Dendritic cell treated with granulocyte-macrophage colony-stimulating factor and Interleukin-4, amounts not matched to agents 40 ng/mL and 50 ng/mL, for 4 days (primary cell): ENCODE measurements at regions of chrX and their contacts with region 1.

Region 1: DNA sequence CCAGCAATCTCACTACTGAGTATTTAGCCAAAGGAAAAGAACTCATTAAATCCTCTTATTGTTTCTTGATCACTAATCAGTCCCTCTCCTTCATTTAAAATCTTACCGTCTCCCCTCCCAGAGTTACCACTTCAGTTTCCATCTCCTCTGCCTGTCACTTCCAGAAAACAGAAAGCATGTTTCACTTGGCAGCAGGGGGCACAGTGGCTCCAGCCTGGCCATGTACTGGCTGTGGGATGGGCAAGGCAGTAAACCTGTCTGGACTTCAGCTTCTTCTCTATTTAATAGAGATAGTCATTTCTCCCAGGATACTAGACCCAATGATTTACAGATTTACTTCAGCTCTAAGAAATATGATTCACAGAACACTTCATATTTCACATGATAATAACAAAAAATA is 63.2 kb downstream of the CD40LG start:
- H3K4me3 Mint-ChIP-seq: no peak overlapping the region
- H3K27ac Mint-ChIP-seq: peak overlapping the region; percentile 88
- H3K4me1 Mint-ChIP-seq: peaks cover 24% of the 10 kb centered on the region
- H3K27me3 Mint-ChIP-seq: no peaks in the 10 kb centered on the region

Region 2: DNA sequence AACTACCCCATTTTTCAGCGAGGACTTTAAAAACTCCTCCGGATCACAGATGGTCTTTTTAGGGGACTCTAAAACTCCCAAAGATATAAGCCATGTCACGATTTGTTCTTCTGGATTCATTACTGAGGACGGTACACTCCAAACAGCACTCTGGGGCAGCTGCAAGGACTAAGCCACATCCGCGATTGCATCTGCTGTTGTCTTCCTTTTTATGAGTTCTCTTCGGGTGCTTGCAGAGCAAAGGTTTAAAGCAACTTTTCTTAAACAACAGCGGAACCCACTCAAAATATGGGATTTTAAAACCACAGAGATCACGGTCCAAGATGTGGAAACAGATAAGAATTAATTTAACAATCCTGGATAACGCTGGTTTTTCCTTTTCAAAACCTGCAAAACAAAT is 69.6 kb after region 1 on chrX and contains the start of gene ARHGEF6:
- intact Hi-C with region 1: loop called (anchors 10 kb)
- H3K4me3 Mint-ChIP-seq: peak within 1 kb of the TSS; percentile 71
- H3K27ac Mint-ChIP-seq: peak within 1 kb of the TSS; percentile 92
- H3K4me1 Mint-ChIP-seq: peaks cover 51% of the 10 kb centered on the region
- H3K27me3 Mint-ChIP-seq: no peaks in the 10 kb centered on the region

Region 3: GRCh38 chrX:136880452-136881013 is 169.4 kb after region 1 on chrX and contains the start of gene RBMX:
- intact Hi-C with region 1: loop called (anchors 10 kb)
- H3K4me3 Mint-ChIP-seq: peak within 1 kb of the TSS; percentile 89
- H3K27ac Mint-ChIP-seq: peak within 1 kb of the TSS; percentile 96
- H3K4me1 Mint-ChIP-seq: peaks cover 9% of the 10 kb centered on the region
- H3K27me3 Mint-ChIP-seq: no peaks in the 10 kb centered on the region

Region 4: GRCh38 chrX:136909706-136910564 is 198.8 kb after region 1 on chrX:
- intact Hi-C with region 1: loop called (anchors 5 kb)
- H3K4me3 Mint-ChIP-seq: peak overlapping the region; percentile 92
- H3K27ac Mint-ChIP-seq: peak overlapping the region; percentile 86
- H3K4me1 Mint-ChIP-seq: peaks cover 17% of the 10 kb centered on the region
- H3K27me3 Mint-ChIP-seq: no peaks in the 10 kb centered on the region

Region 5: GRCh38 chrX:136920001-136920400 is 208.9 kb after region 1 on chrX:
- intact Hi-C with region 1: loop called (anchors 2 kb)
- H3K4me3 Mint-ChIP-seq: no peak overlapping the region
- H3K27ac Mint-ChIP-seq: no peak overlapping the region
- H3K4me1 Mint-ChIP-seq: no peaks in the 10 kb centered on the region
- H3K27me3 Mint-ChIP-seq: no peaks in the 10 kb centered on the region